ENCODE measurements at regions of chr4 and their contacts with region 1.

Region 1: DNA sequence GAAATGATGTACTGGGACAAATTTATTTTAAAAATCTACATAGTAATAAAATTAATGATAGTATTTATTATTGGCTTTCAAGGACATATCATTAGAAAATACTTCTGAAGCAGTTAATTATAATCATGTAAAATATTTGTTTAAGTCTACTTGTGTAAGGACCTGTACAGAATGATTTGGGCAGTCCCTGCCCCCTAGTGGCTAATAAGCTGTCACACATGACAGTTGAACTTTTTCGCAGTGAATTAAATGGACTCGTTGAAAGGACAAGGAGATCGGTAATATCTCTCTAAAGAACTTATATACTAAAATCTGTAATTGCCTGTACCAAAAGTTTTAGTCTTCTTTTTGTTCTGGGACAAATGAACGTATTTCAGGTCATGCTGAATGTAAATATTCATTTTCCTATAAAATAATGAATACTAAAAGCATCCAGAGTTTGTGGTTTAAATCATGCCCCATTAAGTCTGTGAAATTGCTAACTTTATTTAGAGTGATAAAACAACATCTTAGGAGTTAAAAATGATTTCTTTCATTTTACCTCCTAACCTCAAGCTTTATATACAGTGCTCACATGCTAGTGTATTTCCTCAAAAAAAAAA is 13.6 kb downstream of the EXOC1 start:
- DNase-seq: peak in 1 of 2 experiments; percentile 59
- H3K4me3 ChIP-seq: no peak overlapping the region
- H3K27ac ChIP-seq: peak overlapping the region; percentile 76
- H3K4me1 ChIP-seq: peaks cover 27% of the 10 kb centered on the region
- H3K27me3 ChIP-seq: no peaks in the 10 kb centered on the region
- CTCF ChIP-seq: peak; percentile 80

Region 2: DNA sequence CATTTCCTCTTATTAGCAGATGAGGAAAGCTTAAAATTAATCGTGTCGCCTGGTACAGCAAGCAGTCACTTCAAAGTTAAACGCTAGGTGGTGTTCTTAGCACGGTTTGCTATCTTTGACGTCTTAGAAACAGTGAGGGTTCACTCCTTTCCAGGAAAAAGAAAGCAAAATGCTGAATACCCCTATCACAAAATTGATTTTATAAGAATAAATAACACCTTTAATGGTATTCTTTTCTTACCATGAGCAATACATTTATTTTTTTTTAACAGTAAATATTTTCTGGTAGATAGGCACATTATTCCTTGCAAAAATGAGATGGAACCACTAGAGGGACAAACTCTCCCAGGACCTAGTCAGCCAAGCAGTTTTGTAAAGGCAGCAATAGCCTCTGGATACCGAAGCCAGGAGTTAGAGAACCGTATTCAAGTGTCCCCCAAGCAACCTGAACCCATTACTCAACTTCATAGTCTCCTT is 895.6 kb before region 1 on chr4:
- CTCF ChIA-PET with region 1: no interaction called
- POLR2A ChIA-PET with region 1: no interaction called
- intact Hi-C with region 1: loop called (anchors 10 kb)
- DNase-seq: peak in 1 of 2 experiments; percentile 2
- H3K4me3 ChIP-seq: no peak overlapping the region
- H3K27ac ChIP-seq: no peak overlapping the region
- H3K4me1 ChIP-seq: no peaks in the 10 kb centered on the region
- H3K27me3 ChIP-seq: no peaks in the 10 kb centered on the region
- CTCF ChIP-seq: peak; percentile 88

Region 3: DNA sequence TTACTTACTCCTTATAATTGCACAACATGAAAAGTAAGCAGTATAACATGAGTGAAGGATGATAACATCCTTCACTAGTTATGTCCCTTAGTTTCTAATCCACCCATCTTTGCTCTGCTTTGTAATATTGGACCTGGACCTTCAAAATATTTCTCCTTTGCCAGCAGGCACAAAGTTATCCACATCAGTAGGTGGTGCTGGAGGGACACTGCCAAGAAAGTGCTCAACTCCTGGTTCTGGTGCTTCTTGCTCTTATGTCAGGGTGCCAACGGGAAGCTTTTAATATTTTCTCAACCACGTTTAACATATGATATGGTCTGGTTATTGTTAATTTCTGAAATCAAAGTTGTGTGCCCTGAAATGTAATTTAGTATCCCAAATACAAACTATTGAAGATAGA is 422.2 kb before region 1 on chr4:
- CTCF ChIA-PET with region 1: no interaction called
- POLR2A ChIA-PET with region 1: no interaction called
- intact Hi-C with region 1: loop called (anchors 5 kb)
- DNase-seq: no peak
- H3K4me3 ChIP-seq: no peak overlapping the region
- H3K27ac ChIP-seq: no peak overlapping the region
- H3K4me1 ChIP-seq: no peaks in the 10 kb centered on the region
- H3K27me3 ChIP-seq: no peaks in the 10 kb centered on the region
- CTCF ChIP-seq: no peak; the same call in 1 of the 2 replicates

Region 4: DNA sequence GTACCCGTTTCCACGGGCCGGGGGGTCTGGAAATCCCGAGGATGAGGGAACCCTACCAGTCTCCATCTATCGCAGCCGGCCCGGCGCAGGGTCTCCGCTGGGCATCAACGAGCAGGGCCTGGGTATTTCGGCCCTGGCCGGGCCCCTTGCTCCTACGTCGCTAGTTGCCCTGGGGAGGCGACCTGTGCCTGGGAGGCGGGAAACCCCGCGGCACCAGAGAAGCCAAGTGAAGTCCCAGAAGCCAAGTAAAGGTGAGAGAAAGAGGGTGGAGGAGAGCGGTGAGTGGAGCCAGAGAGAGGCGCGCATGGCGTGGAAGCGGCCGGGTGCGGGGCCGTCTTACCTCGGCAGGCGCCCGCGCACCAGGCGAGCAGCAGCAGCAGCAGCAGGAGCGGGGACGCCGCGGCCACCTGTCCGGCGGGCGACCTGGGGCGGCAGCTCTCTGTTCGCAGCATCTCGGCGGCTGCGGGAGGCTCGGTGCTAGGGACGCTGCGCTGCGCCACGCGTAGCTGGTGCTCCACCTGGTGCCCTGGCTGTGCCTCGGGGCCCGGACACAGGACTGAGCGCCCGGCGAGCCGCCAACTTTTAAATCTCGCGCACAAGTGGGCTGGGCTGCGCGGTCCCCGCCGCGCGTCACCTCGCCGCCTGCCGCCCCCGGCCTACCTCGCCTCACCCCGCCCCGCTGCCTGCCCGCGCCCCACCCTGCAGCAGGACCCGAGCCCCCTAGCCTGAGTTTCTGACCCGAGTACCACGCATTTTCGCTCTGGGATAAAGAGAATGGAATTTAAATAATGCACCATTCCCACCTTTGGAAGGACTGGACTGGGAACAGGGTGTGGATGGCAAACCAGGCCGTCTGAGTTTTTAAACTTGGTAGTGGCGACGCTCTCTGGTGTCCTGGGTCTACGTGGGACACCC is 231.1 kb before region 1 on chr4 and contains the start of gene NMU:
- CTCF ChIA-PET with region 1: no interaction called
- POLR2A ChIA-PET with region 1: no interaction called
- intact Hi-C with region 1: loop called (anchors 5 kb)
- DNase-seq: peak; percentile 45 to 74
- H3K4me3 ChIP-seq: peak within 1 kb of the TSS; percentile 66
- H3K27ac ChIP-seq: no peak within 1 kb of the TSS
- H3K4me1 ChIP-seq: 0 out of 2 replicates have a peak, but pooled peaks cover 9% of the 10 kb centered on the region
- H3K27me3 ChIP-seq: no peaks in the 10 kb centered on the region
- CTCF ChIP-seq: no peak
- total RNA-seq, gene NMU: 22.6 and 31.3 TPM in 2 replicates

Region 5: GRCh38 chr4:55770662-55771061 is 96.4 kb before region 1 on chr4:
- CTCF ChIA-PET with region 1: no interaction called
- POLR2A ChIA-PET with region 1: no interaction called
- intact Hi-C with region 1: no loop called
- DNase-seq: no peak
- H3K4me3 ChIP-seq: no peak overlapping the region
- H3K27ac ChIP-seq: no peak overlapping the region
- H3K4me1 ChIP-seq: no peaks in the 10 kb centered on the region
- H3K27me3 ChIP-seq: no peaks in the 10 kb centered on the region
- CTCF ChIP-seq: no peak

Region 6: GRCh38 chr4:55849724-55850123 is 17.4 kb before region 1 on chr4:
- CTCF ChIA-PET with region 1: no interaction called
- POLR2A ChIA-PET with region 1: no interaction called
- intact Hi-C with region 1: no loop called
- DNase-seq: no peak
- H3K4me3 ChIP-seq: no peak overlapping the region
- H3K27ac ChIP-seq: no peak overlapping the region
- H3K4me1 ChIP-seq: peaks cover 31% of the 10 kb centered on the region
- H3K27me3 ChIP-seq: no peaks in the 10 kb centered on the region
- CTCF ChIP-seq: no peak

Region 7: GRCh38 chr4:56301181-56302076 is 434.4 kb after region 1 on chr4:
- CTCF ChIA-PET with region 1: no interaction called
- POLR2A ChIA-PET with region 1: no interaction called
- intact Hi-C with region 1: loop called (anchors 10 kb)
- DNase-seq: peak; percentile 53 to 65
- H3K4me3 ChIP-seq: no peak overlapping the region
- H3K27ac ChIP-seq: no peak overlapping the region
- H3K4me1 ChIP-seq: no peaks in the 10 kb centered on the region
- H3K27me3 ChIP-seq: no peaks in the 10 kb centered on the region
- CTCF ChIP-seq: peak; percentile 82